ENCODE measurements at regions of chr16 and their contacts with region 1.

Region 1: DNA sequence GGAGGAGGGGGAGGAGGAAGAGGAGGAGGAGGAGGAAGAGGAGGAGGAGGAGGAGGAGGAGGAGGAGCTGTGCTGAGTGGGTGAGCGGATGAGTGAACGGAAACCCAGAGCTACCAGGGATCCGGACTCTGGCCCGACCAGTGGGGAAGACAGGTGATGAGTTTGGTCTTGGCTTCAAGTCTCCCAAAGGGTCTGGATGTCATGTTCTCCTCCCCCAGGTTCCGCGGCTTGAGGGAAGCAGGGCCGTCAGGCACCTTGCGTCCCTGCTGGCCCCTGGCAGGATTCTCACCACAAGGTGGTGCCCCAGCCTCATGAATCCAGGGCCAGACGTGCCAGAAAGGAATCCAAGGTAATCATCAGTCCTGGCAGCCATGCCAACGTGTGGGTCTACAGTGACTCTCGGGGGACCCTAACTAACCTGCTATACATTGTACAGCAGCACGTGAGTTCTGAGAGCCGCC is 13.5 kb upstream of the ABAT start:
- DNase-seq: peak; percentile 82 to 89
- H3K4me3 ChIP-seq: no peak overlapping the region
- H3K27ac ChIP-seq: no peak overlapping the region
- H3K4me1 ChIP-seq: no peaks in the 10 kb centered on the region
- H3K27me3 ChIP-seq: no peaks in the 10 kb centered on the region
- CTCF ChIP-seq: peak in 5 of 7 experiments; percentile 15 to 77 (median 69)
- EP300 ChIP-seq: no peak
- POLR2A ChIP-seq: no peak

Region 2: GRCh38 chr16:8797364-8798173 is 136.7 kb after region 1 on chr16 and contains the starts of genes PMM2 and TMEM186:
- intact Hi-C with region 1: loop called (anchors 10 kb)
- DNase-seq: peak; percentile 96 to 99
- H3K4me3 ChIP-seq: peak within 1 kb of the TSS; percentile 66 to 97 (median 96)
- H3K27ac ChIP-seq: peak within 1 kb of the TSS; percentile 85 to 90 (median 86)
- H3K4me1 ChIP-seq: peaks cover 20 to 56% (median 44%) of the 10 kb centered on the region in 4 donors
- H3K27me3 ChIP-seq: no peaks in the 10 kb centered on the region
- CTCF ChIP-seq: peak in 1 of 7 experiments; percentile 23
- EP300 ChIP-seq: no peak
- POLR2A ChIP-seq: no peak
- total RNA-seq, gene PMM2: 36.8 to 89.3 (median 51.8) TPM
- total RNA-seq, gene TMEM186: 5.3 to 12.9 (median 8.1) TPM in 4 of 5 donors, not detected in the other

Region 3: GRCh38 chr16:8878521-8878911 is 217.6 kb after region 1 on chr16:
- intact Hi-C with region 1: loop called (anchors 5 kb)
- DNase-seq: no peak
- H3K4me3 ChIP-seq: no peak overlapping the region
- H3K27ac ChIP-seq: peak overlapping the region in 2 of 5 donors; percentile 31 to 38
- H3K4me1 ChIP-seq: peaks cover 0 to 7% (median 6%) of the 10 kb centered on the region in 4 donors
- H3K27me3 ChIP-seq: peaks cover 0 to 17% (median 0%) of the 10 kb centered on the region in 3 donors
- CTCF ChIP-seq: no peak
- EP300 ChIP-seq: no peak
- POLR2A ChIP-seq: no peak

Measured in stomach (tissue), 19 donors.